ENCODE measurements at regions of chr11 and their contacts with region 1.

Region 1: GRCh38 chr11:47143322-47143721 is 33.4 kb downstream of the ARFGAP2 start:
- DNase-seq: no peak
- H3K4me3 ChIP-seq: no peak overlapping the region
- H3K27ac ChIP-seq: no peak overlapping the region
- H3K4me1 ChIP-seq: no peaks in the 10 kb centered on the region
- H3K27me3 ChIP-seq: no peaks in the 10 kb centered on the region
- CTCF ChIP-seq: no peak

Region 2: GRCh38 chr11:46948378-46949131 is 194.8 kb before region 1 on chr11:
- CTCF ChIA-PET with region 1: no interaction called
- POLR2A ChIA-PET with region 1: interaction called, 12 read pairs
- intact Hi-C with region 1: no loop called
- DNase-seq: peak; percentile 52
- H3K4me3 ChIP-seq: no peak overlapping the region
- H3K27ac ChIP-seq: no peak overlapping the region
- H3K4me1 ChIP-seq: peaks cover 5% of the 10 kb centered on the region
- H3K27me3 ChIP-seq: no peaks in the 10 kb centered on the region
- CTCF ChIP-seq: no peak

Region 3: GRCh38 chr11:47480762-47481161 is 337.4 kb after region 1 on chr11:
- CTCF ChIA-PET with region 1: no interaction called
- POLR2A ChIA-PET with region 1: no interaction called
- intact Hi-C with region 1: no loop called
- DNase-seq: no peak
- H3K4me3 ChIP-seq: no peak overlapping the region
- H3K27ac ChIP-seq: no peak overlapping the region
- H3K4me1 ChIP-seq: no peaks in the 10 kb centered on the region
- H3K27me3 ChIP-seq: no peaks in the 10 kb centered on the region
- CTCF ChIP-seq: no peak

Region 4: DNA sequence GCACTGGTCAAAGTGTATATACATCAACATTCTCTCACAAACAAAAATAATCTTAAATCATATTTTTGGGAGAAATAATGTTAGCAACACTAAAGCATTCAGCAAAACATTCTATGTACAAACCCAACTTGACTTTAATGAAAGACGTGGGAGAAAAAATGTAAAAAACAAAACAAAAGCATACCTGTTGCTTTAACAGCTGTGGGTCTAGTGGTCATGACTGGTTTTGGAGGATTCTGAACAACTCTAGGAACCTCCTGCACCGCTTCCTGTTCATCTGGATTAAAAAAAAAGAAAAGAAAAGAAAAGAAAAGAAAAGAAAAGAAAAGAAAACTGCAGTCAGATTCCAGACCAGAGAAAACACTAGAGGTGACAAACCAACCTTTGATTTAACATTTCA is 621.8 kb after region 1 on chr11:
- CTCF ChIA-PET with region 1: no interaction called
- POLR2A ChIA-PET with region 1: no interaction called
- intact Hi-C with region 1: no loop called
- DNase-seq: no peak
- H3K4me3 ChIP-seq: peak overlapping the region; percentile 60
- H3K27ac ChIP-seq: peak overlapping the region; percentile 2
- H3K4me1 ChIP-seq: peaks cover 21% of the 10 kb centered on the region
- H3K27me3 ChIP-seq: no peaks in the 10 kb centered on the region
- CTCF ChIP-seq: no peak